Heart left ventricle (tissue), 16 donors: ENCODE measurements at regions of chr6 and their contacts with region 1.

Region 1: GRCh38 chr6:105733565-105734162 is 330.8 kb upstream of the PREP start:
- DNase-seq: no peak
- ATAC-seq: no peak
- H3K4me3 ChIP-seq: no peak overlapping the region
- H3K27ac ChIP-seq: no peak overlapping the region
- H3K4me1 ChIP-seq: peaks cover 0 to 4% (median 0%) of the 10 kb centered on the region in 12 donors
- H3K27me3 ChIP-seq: no peaks in the 10 kb centered on the region
- CTCF ChIP-seq: peak; percentile 51 to 78 (median 60)
- POLR2A ChIP-seq: no peak

Region 2: DNA sequence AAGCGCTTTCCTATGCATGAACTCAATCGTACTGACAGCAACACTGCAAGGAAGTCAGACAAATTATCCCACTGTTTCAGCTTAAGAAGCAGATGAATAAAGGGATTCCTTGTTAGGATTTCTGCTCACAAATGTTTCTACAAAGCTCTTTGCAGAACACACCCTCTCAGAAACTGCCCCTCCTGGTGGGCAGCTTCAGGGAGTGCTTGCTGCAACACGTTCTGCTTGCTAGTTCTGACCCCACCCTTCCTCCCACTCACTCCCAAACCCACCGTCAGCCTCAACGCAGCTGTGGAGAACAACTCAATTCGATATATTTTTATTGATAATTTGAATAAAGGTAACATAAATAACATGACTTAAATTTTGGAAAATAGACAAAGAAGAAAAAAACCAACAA is 101.7 kb after region 1 on chr6:
- intact Hi-C with region 1: loop called in 1 of 10 experiments (anchors 10 kb)
- DNase-seq: no peak
- ATAC-seq: no peak
- H3K4me3 ChIP-seq: no peak overlapping the region
- H3K27ac ChIP-seq: no peak overlapping the region
- H3K4me1 ChIP-seq: peaks cover 0 to 34% (median 0%) of the 10 kb centered on the region in 12 donors
- H3K27me3 ChIP-seq: no peaks in the 10 kb centered on the region
- CTCF ChIP-seq: peak in 7 of 12 donors; percentile 8 to 42 (median 20)
- POLR2A ChIP-seq: no peak

Region 3: DNA sequence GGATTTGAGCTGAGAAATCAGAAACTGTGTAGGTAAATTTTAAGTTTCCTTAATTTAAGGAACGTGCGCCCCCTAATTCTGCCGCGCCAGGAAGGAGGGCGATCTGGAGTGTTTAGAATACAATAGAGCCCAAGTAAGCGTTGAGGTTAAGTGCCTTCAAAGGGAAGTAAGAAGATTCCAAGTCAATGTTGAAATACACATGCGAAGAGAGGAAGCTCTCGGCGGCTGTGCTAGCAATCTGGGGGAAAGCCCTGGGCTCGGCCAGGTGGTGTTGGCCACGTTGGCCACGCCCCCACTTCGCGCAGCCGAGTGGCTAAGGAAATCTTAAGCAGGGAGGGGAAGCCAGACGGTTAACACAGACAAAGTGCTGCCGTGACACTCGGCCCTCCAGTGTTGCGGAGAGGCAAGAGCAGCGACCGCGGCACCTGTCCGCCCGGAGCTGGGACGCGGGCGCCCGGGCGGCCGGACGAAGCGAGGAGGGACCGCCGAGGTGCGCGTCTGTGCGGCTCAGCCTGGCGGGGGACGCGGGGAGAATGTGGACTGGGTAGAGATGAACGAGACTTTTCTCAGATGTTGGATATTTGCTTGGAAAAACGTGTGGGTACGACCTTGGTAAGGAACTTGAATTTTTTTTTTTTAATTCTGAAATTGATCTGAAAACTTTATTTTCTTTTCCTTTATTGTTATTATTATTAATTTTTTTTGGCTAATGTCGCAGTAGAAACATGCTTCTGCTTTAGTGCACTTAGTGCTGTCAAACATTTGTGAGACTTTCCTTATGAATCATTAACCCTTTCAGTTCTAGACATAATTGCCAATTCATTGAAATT is 352.5 kb after region 1 on chr6 and contains the start of gene PRDM1:
- intact Hi-C with region 1: loop called in 3 of 10 experiments (anchors 10 kb)
- DNase-seq: peak; percentile 66 to 89 (median 81)
- ATAC-seq: peak; percentile 49 to 82 (median 76)
- H3K4me3 ChIP-seq: peak within 1 kb of the TSS; percentile 12 to 66 (median 52)
- H3K27ac ChIP-seq: peak within 1 kb of the TSS; percentile 8 to 87 (median 58)
- H3K4me1 ChIP-seq: peaks cover 0 to 76% (median 7%) of the 10 kb centered on the region in 12 donors
- H3K27me3 ChIP-seq: peaks cover 0 to 62% (median 12%) of the 10 kb centered on the region in 9 donors
- CTCF ChIP-seq: peak in 6 of 12 donors; percentile 3 to 20 (median 14)
- POLR2A ChIP-seq: peak in 1 of 2 donors; percentile 38
- total RNA-seq, gene PRDM1: 1.0 to 10.8 (median 1.7) TPM

Region 4: GRCh38 chr6:106300944-106301343 is 567.3 kb after region 1 on chr6:
- intact Hi-C with region 1: loop called in 3 of 10 experiments (anchors 5 to 10 kb)
- DNase-seq: no peak
- ATAC-seq: no peak
- H3K4me3 ChIP-seq: no peak overlapping the region
- H3K27ac ChIP-seq: no peak overlapping the region
- H3K4me1 ChIP-seq: peaks cover 0 to 5% (median 0%) of the 10 kb centered on the region in 12 donors
- H3K27me3 ChIP-seq: no peaks in the 10 kb centered on the region
- CTCF ChIP-seq: peak in 11 of 12 donors; percentile 24 to 67 (median 51)
- POLR2A ChIP-seq: no peak